ENCODE measurements at regions of chr2 and their contacts with region 1.

Region 1: GRCh38 chr2:38535744-38536506 is 66.8 kb downstream of the HNRNPLL start:
- DNase-seq: peak; percentile 60 to 77 (median 70)
- H3K4me3 ChIP-seq: peak overlapping the region; percentile 47 to 52
- H3K4me3 Mint-ChIP-seq: peak overlapping the region; percentile 25 to 77 (median 52)
- H3K27ac ChIP-seq: no peak overlapping the region
- H3K27ac Mint-ChIP-seq: peak overlapping the region in 1 of 7 donors; percentile 36
- H3K4me1 ChIP-seq: peaks cover 9% of the 10 kb centered on the region
- H3K4me1 Mint-ChIP-seq: peaks cover 0 to 6% (median 2%) of the 10 kb centered on the region in 4 donors
- H3K27me3 ChIP-seq: no peaks in the 10 kb centered on the region
- H3K27me3 Mint-ChIP-seq: peaks cover 0 to 2% of the 10 kb centered on the region in 2 donors

Region 2: DNA sequence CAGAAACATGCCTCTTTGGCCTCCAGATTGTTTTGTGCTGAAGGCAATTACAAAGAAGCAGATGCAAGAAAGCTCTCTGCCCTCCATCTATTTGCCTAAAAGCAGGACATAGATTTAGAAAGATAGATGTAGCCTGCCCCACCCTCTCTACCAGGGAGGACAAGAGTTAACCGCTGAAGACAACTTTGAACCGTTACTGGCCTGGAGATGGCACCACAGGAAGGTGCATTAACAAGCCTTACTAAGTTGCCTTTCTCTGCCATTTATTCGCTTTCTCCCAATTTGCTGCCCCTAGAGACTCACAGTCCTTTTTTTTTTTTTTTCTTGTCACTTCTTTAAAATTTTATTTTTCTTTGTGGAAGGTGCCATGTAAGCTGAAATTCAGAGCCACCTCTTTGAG is 639.6 kb before region 1 on chr2:
- CTCF ChIA-PET with region 1: no interaction called
- POLR2A ChIA-PET with region 1: no interaction called
- intact Hi-C with region 1: no loop called
- DNase-seq: no peak
- H3K4me3 ChIP-seq: no peak overlapping the region
- H3K4me3 Mint-ChIP-seq: no peak overlapping the region
- H3K27ac ChIP-seq: no peak overlapping the region
- H3K27ac Mint-ChIP-seq: no peak overlapping the region
- H3K4me1 ChIP-seq: peaks cover 27% of the 10 kb centered on the region
- H3K4me1 Mint-ChIP-seq: peaks cover 25 to 31% (median 29%) of the 10 kb centered on the region in 4 donors
- H3K27me3 ChIP-seq: no peaks in the 10 kb centered on the region
- H3K27me3 Mint-ChIP-seq: no peaks in the 10 kb centered on the region

Region 3: DNA sequence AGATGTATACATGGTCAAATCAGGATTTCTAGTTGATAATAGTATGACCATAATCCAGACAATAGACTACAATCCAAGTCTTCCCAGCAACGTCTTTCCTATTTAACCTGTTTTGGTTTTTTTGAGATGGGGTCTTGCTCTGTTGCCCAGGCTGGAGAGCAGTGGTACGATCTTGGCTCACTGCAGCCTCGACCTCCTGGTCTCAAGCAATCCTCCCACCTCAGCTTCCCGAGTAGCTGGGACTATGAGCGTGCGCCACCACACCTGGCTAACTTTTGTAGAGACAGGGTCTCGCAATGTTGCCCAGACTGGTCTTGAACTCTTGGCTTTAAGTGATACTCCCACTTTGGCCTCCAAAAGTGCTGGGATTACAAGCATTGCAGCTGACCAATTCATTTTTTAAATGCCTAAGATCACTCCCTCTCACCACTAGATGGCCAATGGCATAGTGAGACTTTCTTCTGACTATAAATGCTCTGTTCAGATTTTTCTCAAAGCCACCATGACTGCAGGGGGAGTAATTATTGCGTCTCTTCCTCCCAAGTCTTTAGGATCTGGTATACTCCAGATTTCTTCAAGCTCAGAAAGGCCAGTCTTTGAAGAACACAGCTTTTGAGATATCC is 19.2 kb after region 1 on chr2:
- CTCF ChIA-PET with region 1: interaction called, 25 read pairs
- POLR2A ChIA-PET with region 1: no interaction called
- intact Hi-C with region 1: no loop called
- DNase-seq: no peak
- H3K4me3 ChIP-seq: no peak overlapping the region
- H3K4me3 Mint-ChIP-seq: no peak overlapping the region
- H3K27ac ChIP-seq: no peak overlapping the region
- H3K27ac Mint-ChIP-seq: peak overlapping the region in 1 of 7 donors; percentile 32
- H3K4me1 ChIP-seq: peaks cover 5% of the 10 kb centered on the region
- H3K4me1 Mint-ChIP-seq: peaks cover 9 to 20% (median 16%) of the 10 kb centered on the region in 4 donors
- H3K27me3 ChIP-seq: no peaks in the 10 kb centered on the region
- H3K27me3 Mint-ChIP-seq: no peaks in the 10 kb centered on the region

Region 4: GRCh38 chr2:38572167-38572566 is 36.2 kb after region 1 on chr2:
- CTCF ChIA-PET with region 1: interaction called, 10 read pairs
- POLR2A ChIA-PET with region 1: no interaction called
- intact Hi-C with region 1: no loop called
- DNase-seq: no peak
- H3K4me3 ChIP-seq: no peak overlapping the region
- H3K4me3 Mint-ChIP-seq: peak overlapping the region in 1 of 8 donors; percentile 9
- H3K27ac ChIP-seq: peak overlapping the region; percentile 30
- H3K27ac Mint-ChIP-seq: peak overlapping the region; percentile 13 to 82 (median 58)
- H3K4me1 ChIP-seq: peaks cover 37% of the 10 kb centered on the region
- H3K4me1 Mint-ChIP-seq: peaks cover 19 to 47% (median 31%) of the 10 kb centered on the region in 4 donors
- H3K27me3 ChIP-seq: no peaks in the 10 kb centered on the region
- H3K27me3 Mint-ChIP-seq: no peaks in the 10 kb centered on the region

Region 5: DNA sequence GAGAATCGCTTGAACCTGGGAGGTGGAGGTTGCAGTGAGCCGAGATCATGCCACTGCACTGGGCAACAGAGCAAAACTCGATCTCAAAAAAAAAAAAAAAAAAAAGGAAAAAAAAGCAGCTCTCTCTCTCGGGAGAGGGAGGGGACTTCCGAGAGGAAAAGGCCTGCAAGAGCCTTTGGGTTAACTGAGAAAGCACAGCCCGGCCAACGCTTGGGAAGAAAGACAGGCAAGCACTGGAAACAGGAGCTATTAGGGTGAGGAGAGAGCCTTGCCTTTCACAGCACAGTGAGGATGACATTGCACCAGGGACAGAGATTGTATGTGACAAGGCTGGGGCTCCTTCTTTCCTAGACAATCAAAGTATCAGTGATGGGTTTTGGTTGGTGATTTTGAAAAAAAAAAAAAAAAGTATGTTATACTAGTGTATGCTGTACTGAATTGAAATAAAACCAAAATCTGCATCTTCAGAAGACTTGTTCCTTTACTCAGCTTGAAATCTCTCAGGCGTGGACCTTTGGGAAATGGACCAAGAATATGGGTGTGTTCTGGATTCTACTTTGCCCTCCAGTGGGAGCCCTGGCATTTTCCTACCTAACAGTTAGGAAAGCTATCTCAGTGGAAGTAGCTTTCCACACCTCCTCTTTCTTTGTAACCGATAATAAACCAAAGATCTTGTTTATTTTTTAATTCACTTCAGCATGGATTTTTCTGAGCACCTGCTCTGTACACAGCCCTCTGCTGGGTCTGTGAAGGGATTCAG is 198.6 kb after region 1 on chr2:
- CTCF ChIA-PET with region 1: interaction called, 96 read pairs
- POLR2A ChIA-PET with region 1: interaction called, 6 read pairs
- intact Hi-C with region 1: no loop called
- DNase-seq: no peak
- H3K4me3 ChIP-seq: no peak overlapping the region
- H3K4me3 Mint-ChIP-seq: no peak overlapping the region
- H3K27ac ChIP-seq: no peak overlapping the region
- H3K27ac Mint-ChIP-seq: peak overlapping the region in 3 of 7 donors; percentile 47 to 70 (median 68)
- H3K4me1 ChIP-seq: no peaks in the 10 kb centered on the region
- H3K4me1 Mint-ChIP-seq: peaks cover 7 to 21% (median 14%) of the 10 kb centered on the region in 4 donors
- H3K27me3 ChIP-seq: no peaks in the 10 kb centered on the region
- H3K27me3 Mint-ChIP-seq: no peaks in the 10 kb centered on the region

Region 6: DNA sequence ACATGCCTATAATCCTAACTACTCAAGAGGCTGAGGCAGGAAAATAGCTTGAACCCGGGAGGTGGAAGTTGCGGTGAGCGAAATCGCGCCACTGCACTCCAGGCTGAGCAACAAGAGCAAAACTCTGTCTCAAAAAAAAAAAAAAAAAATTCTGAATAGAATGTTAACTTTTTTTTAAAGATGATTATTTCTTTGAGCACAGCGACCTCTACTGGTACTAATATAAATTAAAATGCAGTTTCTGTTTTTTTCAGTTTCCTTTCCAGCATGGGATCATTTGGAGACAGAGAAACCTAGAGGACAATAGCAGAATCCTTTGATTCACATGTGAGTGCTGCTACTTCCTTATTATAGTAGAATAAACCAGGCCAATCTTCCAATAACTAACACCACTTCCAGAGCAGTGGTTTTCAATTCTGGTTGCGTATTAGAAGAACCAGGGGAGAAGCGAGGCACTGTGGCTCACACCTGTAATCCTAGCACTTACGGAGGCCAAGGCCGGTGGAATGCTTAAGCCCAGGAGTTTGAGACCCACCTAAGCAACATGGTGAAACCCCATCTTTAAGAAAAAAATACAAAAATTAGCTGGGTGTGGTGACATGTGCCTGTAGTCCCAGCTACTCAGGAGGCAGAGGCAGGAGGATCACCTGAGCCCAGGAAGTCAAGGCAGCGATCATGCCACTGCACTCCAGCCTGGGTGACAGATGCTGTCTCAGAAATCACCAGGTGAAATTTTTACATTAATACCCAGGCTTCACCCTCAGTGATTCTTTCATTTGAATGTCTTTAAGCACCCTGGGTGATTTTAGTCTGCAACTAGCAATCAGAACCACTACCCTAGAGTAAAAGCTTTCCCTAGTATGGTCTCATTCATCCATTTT is 205.2 kb after region 1 on chr2:
- CTCF ChIA-PET with region 1: interaction called, 96 read pairs
- POLR2A ChIA-PET with region 1: interaction called, 6 read pairs
- intact Hi-C with region 1: loop called (anchors 1 kb)
- DNase-seq: peak; percentile 60 to 71 (median 65)
- H3K4me3 ChIP-seq: no peak overlapping the region
- H3K4me3 Mint-ChIP-seq: peak overlapping the region in 4 of 8 donors; percentile 15 to 39 (median 27)
- H3K27ac ChIP-seq: no peak overlapping the region
- H3K27ac Mint-ChIP-seq: peak overlapping the region; percentile 30 to 99 (median 83)
- H3K4me1 ChIP-seq: peaks cover 54% of the 10 kb centered on the region
- H3K4me1 Mint-ChIP-seq: peaks cover 31 to 78% (median 44%) of the 10 kb centered on the region in 4 donors
- H3K27me3 ChIP-seq: no peaks in the 10 kb centered on the region
- H3K27me3 Mint-ChIP-seq: no peaks in the 10 kb centered on the region

Region 7: GRCh38 chr2:38835015-38835601 is 299.2 kb after region 1 on chr2:
- CTCF ChIA-PET with region 1: interaction called, 3 read pairs
- POLR2A ChIA-PET with region 1: no interaction called
- intact Hi-C with region 1: loop called (anchors 1 kb)
- DNase-seq: peak in 3 of 5 donors; percentile 10 to 19 (median 18)
- H3K4me3 ChIP-seq: no peak overlapping the region
- H3K4me3 Mint-ChIP-seq: no peak overlapping the region
- H3K27ac ChIP-seq: no peak overlapping the region
- H3K27ac Mint-ChIP-seq: no peak overlapping the region
- H3K4me1 ChIP-seq: no peaks in the 10 kb centered on the region
- H3K4me1 Mint-ChIP-seq: no peaks in the 10 kb centered on the region
- H3K27me3 ChIP-seq: no peaks in the 10 kb centered on the region
- H3K27me3 Mint-ChIP-seq: no peaks in the 10 kb centered on the region

Measured in CD4-positive, alpha-beta memory T cell (primary cell).